Activated CD4-positive, alpha-beta memory T cell treated with anti-CD3 and anti-CD28 coated beads, Interleukin-2, amount 10 ng/mL, durations not matched to agents 7 days and 5 days (primary cell): ENCODE measurements at regions of chr3 and their contacts with region 1.

Region 1: DNA sequence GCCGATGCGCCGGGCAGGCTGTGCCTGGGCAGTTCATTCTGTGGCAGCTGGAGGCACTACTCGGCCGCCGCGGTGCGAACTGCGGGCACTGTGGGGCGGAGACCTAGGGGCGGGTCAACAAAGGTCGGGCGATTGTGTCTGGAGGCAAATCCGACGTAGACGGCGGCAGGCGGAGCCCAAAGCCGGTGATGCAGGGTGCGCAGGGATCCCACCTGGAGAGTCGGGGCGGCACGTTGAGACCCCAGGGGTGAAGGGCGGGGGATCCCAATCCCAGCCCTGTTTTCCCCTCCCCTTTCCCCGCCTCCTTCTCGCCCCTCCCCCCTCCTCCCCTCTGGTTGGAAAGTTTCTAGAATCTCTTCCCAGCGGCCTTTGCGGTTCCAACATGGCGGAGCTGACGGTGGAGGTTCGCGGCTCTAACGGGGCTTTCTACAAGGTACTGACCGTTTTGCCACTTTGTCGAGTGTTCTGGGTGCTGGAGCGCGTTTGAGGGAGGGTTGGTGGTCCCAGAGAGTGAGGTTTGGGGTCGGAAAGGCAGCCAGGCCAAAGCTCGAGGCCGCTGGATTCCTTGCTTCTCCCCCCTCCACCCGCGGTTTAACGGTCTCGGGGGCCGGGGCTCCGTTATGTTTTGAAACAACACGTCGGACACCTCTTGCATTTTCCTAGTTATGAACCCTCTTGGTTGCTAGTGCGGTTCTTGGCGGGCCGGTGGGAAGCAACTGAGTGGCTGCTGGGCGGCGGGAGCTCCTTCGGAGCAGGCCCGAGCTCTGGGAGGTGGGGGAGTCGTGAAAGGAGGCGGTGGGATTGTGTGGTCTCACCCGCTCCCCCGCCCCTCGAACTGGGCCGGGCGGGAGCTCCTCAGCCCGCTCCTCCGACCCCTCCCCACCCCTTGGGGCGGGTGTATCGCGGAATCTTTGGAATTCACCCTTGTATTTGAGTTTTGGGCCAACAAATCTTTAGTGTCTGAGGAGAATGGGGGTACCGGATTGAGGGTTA is at the start of gene FXR1:
- DNase-seq: peak; percentile 92
- H3K4me3 Mint-ChIP-seq: peak within 1 kb of the TSS; percentile 89
- H3K27ac Mint-ChIP-seq: peak within 1 kb of the TSS; percentile 76
- H3K4me1 Mint-ChIP-seq: peaks cover 44% of the 10 kb centered on the region
- H3K27me3 Mint-ChIP-seq: no peaks in the 10 kb centered on the region
- total RNA-seq, gene FXR1: 127 to 134 TPM

Region 2: DNA sequence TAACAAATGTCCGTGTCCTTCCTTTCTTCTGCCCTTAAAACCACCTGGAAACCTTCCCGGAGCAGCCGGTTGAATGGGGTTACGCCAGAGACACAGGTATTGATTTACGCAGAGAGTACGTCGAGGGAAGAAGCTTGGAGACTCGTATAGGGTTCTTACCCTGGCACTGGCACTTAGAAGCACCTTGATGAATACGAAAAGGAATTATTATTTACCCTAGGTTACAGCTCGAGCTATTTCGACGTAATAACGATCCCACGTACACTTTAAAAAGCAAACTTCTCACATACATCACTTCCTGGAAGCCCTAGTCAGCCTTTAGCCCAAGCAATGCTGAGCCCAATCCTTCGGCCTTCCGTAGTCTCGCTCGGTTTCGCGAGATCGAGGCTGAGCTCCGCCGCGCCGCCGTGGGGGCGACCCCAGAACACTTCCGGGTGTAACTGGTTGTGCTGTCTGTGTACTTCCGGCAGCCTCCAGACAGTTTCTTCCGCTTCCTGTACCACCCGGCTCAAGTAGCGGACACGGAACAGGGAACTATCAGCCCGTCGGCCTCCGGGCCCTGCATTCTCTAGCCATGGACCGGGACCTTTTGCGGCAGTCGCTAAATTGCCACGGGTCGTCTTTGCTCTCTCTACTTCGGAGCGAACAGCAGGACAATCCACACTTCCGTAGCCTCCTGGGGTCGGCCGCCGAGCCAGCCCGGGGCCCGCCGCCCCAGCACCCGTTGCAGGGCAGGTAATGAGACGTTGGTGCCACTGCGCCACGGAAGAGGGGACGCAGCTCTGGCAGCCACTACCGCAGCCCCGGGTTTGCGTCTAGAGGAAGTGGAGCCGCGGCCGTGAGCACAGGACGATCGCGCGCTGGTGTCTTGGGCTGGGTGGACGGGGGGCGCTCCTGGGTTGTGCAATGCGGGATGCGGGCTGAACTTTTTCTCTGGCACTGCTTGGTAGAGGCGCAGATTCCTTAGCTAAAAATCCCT is 310.6 kb before region 1 on chr3 and contains the start of gene TTC14:
- CTCF ChIA-PET with region 1: interaction called, 3 read pairs
- POLR2A ChIA-PET with region 1: interaction called, 16 read pairs
- DNase-seq: peak; percentile 95
- H3K4me3 Mint-ChIP-seq: peak within 1 kb of the TSS; percentile 86
- H3K27ac Mint-ChIP-seq: peak within 1 kb of the TSS; percentile 87
- H3K4me1 Mint-ChIP-seq: peaks cover 39% of the 10 kb centered on the region
- H3K27me3 Mint-ChIP-seq: peaks cover 11% of the 10 kb centered on the region
- total RNA-seq, gene TTC14: 66.2 to 68.7 TPM

Region 3: GRCh38 chr3:180690061-180690460 is 222.5 kb before region 1 on chr3:
- CTCF ChIA-PET with region 1: no interaction called
- POLR2A ChIA-PET with region 1: no interaction called
- DNase-seq: no peak
- H3K4me3 Mint-ChIP-seq: no peak overlapping the region
- H3K27ac Mint-ChIP-seq: no peak overlapping the region
- H3K4me1 Mint-ChIP-seq: no peaks in the 10 kb centered on the region
- H3K27me3 Mint-ChIP-seq: peaks cover 12% of the 10 kb centered on the region

Region 4: DNA sequence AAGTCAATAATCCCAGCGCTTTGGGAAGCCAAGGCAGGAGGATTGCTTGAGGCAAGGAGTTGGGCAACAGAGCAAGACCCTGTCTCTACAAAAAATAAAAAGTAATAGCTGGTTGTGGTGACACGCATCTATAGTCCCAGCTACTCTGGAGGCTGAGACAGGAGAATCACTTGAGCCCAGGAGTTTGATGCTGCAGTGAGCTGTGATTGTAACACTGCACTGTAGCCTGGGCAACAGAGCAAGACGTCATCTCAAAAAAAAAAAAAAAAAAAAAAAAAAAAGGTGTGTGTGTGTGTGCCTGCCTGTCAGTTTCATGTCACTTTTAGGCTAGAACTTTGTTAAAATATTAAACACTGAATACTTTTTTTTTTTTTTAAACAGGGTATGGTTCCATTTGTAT is 48.5 kb after region 1 on chr3:
- CTCF ChIA-PET with region 1: interaction called, 13 read pairs
- POLR2A ChIA-PET with region 1: interaction called, 3 read pairs
- DNase-seq: no peak
- H3K4me3 Mint-ChIP-seq: no peak overlapping the region
- H3K27ac Mint-ChIP-seq: no peak overlapping the region
- H3K4me1 Mint-ChIP-seq: peaks cover 10% of the 10 kb centered on the region
- H3K27me3 Mint-ChIP-seq: no peaks in the 10 kb centered on the region

Region 5: GRCh38 chr3:180989291-180990163 is 76.9 kb after region 1 on chr3 and contains the start of gene DNAJC19:
- CTCF ChIA-PET with region 1: interaction called, 9 read pairs
- POLR2A ChIA-PET with region 1: interaction called, 20 read pairs
- DNase-seq: peak; percentile 92
- H3K4me3 Mint-ChIP-seq: peak within 1 kb of the TSS; percentile 87
- H3K27ac Mint-ChIP-seq: peak within 1 kb of the TSS; percentile 79
- H3K4me1 Mint-ChIP-seq: peaks cover 37% of the 10 kb centered on the region
- H3K27me3 Mint-ChIP-seq: peaks cover 1% of the 10 kb centered on the region
- total RNA-seq, gene DNAJC19: 40.3 to 44.7 TPM